ENCODE measurements at regions of chr1 and their contacts with region 1.

Region 1: DNA sequence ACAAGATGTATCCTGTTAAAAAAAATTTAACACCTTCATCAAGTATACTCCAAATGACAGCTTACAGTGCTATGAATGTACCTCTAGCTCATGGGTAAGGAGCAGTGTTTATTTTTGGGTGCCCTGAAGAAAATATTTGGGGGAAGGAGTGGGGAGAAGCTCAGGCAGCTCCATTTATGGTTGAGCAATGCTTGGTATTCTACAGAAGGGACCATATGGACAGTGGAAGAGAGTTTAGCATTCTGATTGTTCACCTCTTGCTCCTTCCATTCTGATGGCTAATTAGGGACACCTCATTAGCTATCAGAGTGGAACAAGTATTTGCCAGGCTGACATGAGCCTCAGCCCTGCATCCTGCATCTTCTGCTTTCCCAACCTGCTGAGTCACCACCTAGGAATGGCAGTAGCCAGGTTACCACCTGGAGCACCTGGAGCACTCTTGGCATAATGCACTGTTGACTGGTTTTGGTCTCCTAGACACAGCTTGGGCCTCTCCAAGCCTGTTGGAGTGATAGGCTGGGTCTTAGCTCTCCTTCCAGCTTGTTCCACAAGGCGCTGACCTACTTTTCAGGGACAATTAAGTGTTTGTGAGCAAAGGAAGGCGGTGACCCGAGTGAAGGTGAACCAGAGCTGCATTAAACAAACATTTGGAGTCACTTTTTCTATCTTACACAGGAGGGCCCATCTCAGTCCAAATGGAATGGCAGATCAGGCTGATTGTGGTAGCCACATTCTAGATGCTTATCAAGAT is 61.9 kb upstream of the MACF1 start:
- DNase-seq: no peak
- ATAC-seq: peak in 3 of 4 donors; percentile 34 to 53 (median 35)
- H3K4me3 ChIP-seq: no peak overlapping the region
- H3K27ac ChIP-seq: no peak overlapping the region
- H3K4me1 ChIP-seq: peaks cover 37% of the 10 kb centered on the region
- H3K27me3 ChIP-seq: no peaks in the 10 kb centered on the region
- CTCF ChIP-seq: no peak

Region 2: DNA sequence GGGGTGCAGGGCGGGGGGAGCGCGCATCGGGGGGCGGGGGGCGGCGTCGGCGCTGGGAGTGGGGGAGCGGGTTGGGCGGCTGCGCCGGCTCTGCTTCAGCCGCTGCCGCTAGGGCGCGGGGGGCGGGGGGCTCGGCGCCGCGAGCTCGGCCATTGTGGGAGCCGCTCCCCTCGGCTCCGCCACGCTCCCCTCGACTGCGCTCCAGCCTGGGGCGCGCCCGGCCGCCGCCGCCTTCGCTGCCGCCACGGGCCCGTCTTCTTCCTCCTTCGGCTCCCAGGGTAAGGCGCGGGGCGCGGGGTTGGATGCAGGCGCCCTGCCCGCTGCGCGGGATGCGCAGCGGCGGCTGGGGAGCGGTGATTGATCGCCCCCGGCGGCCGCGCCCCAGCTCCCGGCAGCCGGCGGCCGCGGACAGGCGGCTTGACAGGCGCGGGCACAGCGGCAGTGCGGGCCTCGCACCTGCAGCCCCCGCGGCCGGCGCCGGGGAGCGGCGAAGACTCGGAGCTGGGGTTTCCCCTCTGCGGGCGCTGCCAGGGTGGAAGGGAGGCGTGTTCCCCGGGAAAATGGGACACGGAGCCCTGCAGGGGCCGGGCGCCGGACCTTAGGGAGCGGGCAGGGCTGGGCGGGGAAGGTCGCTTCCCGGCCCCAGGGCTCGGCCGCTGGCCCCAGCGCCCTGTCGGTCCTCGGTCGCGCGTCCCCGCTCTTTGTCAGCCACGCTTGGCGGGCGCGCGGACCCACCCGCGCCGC is 61.1 kb before region 1 on chr1:
- intact Hi-C with region 1: no loop called
- DNase-seq: peak; percentile 32 to 63
- ATAC-seq: peak; percentile 53 to 75 (median 65)
- H3K4me3 ChIP-seq: peak overlapping the region; percentile 66
- H3K27ac ChIP-seq: no peak overlapping the region
- H3K4me1 ChIP-seq: no peaks in the 10 kb centered on the region
- H3K27me3 ChIP-seq: peaks cover 0 to 35% (median 8%) of the 10 kb centered on the region in 3 donors
- CTCF ChIP-seq: no peak

Region 3: GRCh38 chr1:39183503-39184353 is 41.2 kb after region 1 on chr1:
- intact Hi-C with region 1: loop called in 1 of 2 experiments (anchors 5 kb)
- DNase-seq: peak; percentile 67 to 81
- ATAC-seq: peak; percentile 93 to 97 (median 94)
- H3K4me3 ChIP-seq: no peak overlapping the region
- H3K27ac ChIP-seq: peak overlapping the region; percentile 84
- H3K4me1 ChIP-seq: peaks cover 43% of the 10 kb centered on the region
- H3K27me3 ChIP-seq: no peaks in the 10 kb centered on the region
- CTCF ChIP-seq: peak; percentile 57